Heart left ventricle (tissue), 16 donors: ENCODE measurements at regions of chr22 and their contacts with region 1.

Region 1: GRCh38 chr22:33519071-33519973 is 401.0 kb downstream of the LARGE1 start:
- DNase-seq: peak in 4 of 5 donors; percentile 29 to 54 (median 37)
- ATAC-seq: peak; percentile 37 to 69 (median 55)
- H3K4me3 ChIP-seq: no peak overlapping the region
- H3K27ac ChIP-seq: peak overlapping the region in 1 of 12 donors; percentile 19
- H3K4me1 ChIP-seq: peaks cover 0 to 23% (median 11%) of the 10 kb centered on the region in 12 donors
- H3K27me3 ChIP-seq: no peaks in the 10 kb centered on the region
- CTCF ChIP-seq: peak; percentile 38 to 82 (median 70)
- POLR2A ChIP-seq: no peak

Region 2: DNA sequence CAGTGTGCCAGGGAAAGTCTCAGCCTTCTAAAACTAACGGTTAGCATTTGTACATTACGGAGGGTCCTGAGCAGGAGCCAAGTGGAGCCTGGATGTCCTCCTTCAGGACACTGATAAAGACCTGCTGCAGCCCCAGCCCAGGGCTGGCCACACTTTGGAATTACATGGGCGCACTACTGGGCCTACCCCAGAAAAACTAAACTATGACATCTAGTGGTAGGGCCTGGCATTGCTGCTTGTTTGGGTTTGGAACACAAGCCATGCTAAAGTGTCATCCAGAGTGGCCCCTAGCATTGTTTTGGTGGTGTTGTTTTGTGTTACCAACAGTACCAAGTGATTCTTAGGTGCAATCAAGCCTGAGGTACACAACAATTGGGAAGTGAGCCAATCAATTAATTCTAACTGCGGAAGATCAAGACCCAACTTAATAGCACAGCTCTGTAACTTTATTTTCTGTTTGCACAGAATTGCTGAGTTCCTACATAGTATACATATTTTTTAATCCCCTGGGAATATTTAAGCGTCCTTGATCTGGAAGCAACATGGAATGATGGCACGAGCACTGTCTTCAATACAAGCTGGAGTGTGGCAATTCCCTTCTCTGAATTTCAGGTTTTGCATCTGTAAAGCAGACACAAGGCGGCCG is 60.2 kb after region 1 on chr22:
- intact Hi-C with region 1: loop called (anchors 1 to 5 kb)
- DNase-seq: peak in 4 of 5 donors; percentile 65 to 70 (median 69)
- ATAC-seq: peak; percentile 88 to 92 (median 90)
- H3K4me3 ChIP-seq: no peak overlapping the region
- H3K27ac ChIP-seq: peak overlapping the region in 2 of 12 donors; percentile 13 to 37
- H3K4me1 ChIP-seq: peaks cover 0 to 34% (median 14%) of the 10 kb centered on the region in 12 donors
- H3K27me3 ChIP-seq: no peaks in the 10 kb centered on the region
- CTCF ChIP-seq: peak; percentile 77 to 98 (median 92)
- POLR2A ChIP-seq: no peak

Region 3: GRCh38 chr22:33747576-33748180 is 228.4 kb after region 1 on chr22:
- intact Hi-C with region 1: loop called in 1 of 10 experiments (anchors 10 kb)
- DNase-seq: peak in 2 of 5 donors; percentile 27 to 47
- ATAC-seq: peak in 3 of 4 donors; percentile 11 to 37 (median 21)
- H3K4me3 ChIP-seq: no peak overlapping the region
- H3K27ac ChIP-seq: no peak overlapping the region
- H3K4me1 ChIP-seq: peaks cover 0 to 33% (median 8%) of the 10 kb centered on the region in 12 donors
- H3K27me3 ChIP-seq: no peaks in the 10 kb centered on the region
- CTCF ChIP-seq: peak in 1 of 12 donors; percentile 12
- POLR2A ChIP-seq: no peak

Region 4: GRCh38 chr22:33756508-33756949 is 237.2 kb after region 1 on chr22:
- intact Hi-C with region 1: loop called in 1 of 10 experiments (anchors 5 kb)
- DNase-seq: peak in 3 of 5 donors; percentile 35 to 43 (median 37)
- ATAC-seq: peak; percentile 42 to 79 (median 62)
- H3K4me3 ChIP-seq: no peak overlapping the region
- H3K27ac ChIP-seq: peak overlapping the region in 4 of 12 donors; percentile 5 to 54 (median 12)
- H3K4me1 ChIP-seq: peaks cover 0 to 27% (median 7%) of the 10 kb centered on the region in 12 donors
- H3K27me3 ChIP-seq: no peaks in the 10 kb centered on the region
- CTCF ChIP-seq: peak in 2 of 12 donors; percentile 7 to 24
- POLR2A ChIP-seq: no peak

Region 5: DNA sequence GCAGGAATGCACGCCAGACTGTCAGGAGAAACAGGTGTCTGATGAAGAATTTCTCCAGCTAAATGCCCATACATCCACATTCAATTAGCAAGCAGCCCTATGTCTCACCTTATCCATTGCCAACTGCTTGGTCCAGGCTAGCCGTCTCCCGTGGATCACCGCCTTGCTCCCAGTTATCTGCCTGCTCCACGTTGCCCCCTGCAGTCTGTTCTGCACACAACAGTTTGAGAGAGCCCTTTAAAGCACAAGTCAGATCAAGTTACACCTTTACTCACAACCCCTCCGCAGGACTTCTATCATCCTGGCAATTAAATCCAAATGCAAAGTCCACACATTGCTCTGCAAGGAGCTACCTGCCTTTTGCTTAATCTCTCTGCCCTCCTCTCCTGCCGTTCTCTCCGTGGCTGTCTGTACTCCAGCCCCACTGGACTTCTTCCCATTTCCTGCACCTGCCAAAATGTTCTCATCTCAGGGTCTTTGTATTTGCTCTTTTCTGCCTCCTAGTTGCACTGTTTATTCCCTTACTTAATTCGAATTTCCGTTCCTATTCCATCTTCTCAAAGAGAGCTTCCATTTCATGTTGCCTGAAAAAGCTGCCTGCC is 586.2 kb after region 1 on chr22:
- intact Hi-C with region 1: loop called in 4 of 10 experiments (anchors 5 to 10 kb)
- DNase-seq: peak in 4 of 5 donors; percentile 31 to 62 (median 51)
- ATAC-seq: peak in 3 of 4 donors; percentile 72 to 82 (median 78)
- H3K4me3 ChIP-seq: no peak overlapping the region
- H3K27ac ChIP-seq: no peak overlapping the region
- H3K4me1 ChIP-seq: no peaks in the 10 kb centered on the region
- H3K27me3 ChIP-seq: peaks cover 0 to 11% (median 0%) of the 10 kb centered on the region in 9 donors
- CTCF ChIP-seq: peak; percentile 50 to 77 (median 68)
- POLR2A ChIP-seq: no peak